ENCODE measurements at regions of chr4 and their contacts with region 1.

Region 1: GRCh38 chr4:3911252-3911856 is 145.2 kb downstream of the ADRA2C start:
- DNase-seq: no peak
- ATAC-seq: no peak
- H3K4me3 ChIP-seq: no peak overlapping the region
- H3K27ac ChIP-seq: no peak overlapping the region
- H3K4me1 ChIP-seq: no peaks in the 10 kb centered on the region
- H3K27me3 ChIP-seq: no peaks in the 10 kb centered on the region
- CTCF ChIP-seq: no peak

Region 2: DNA sequence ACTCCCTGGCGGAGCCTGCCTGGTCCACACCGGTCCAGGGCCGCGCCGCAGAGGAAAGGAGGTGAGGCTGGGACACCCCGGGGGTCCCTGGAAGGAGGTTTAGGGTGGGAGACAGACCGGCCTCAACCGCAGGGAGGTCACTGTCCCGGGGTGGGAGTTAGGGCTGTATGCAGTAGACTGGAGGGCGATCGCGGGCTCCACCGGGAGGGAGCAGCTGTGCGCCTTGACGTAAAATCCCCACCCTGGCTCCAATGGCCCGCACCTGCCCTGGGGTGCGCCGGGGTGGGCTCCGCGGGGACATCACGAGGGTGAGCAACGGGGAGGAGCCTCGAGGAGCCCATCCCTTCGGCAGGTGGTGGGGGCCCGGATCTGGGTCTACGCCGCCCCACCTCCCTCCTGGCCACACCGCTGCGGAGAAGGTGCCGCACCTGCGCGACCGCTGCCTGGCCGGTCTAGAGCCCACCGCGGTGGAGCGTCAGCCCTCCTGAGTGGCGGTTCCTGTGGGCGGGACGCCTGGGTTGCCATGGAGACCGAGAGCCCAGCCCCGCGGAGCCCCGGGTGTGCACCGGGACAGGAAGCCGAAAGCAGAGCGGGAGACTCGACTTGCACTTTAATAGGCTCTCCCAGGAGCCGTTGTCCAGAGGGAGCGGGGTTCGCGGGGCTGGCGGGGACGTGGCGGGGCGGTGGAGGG is 40.0 kb before region 1 on chr4:
- CTCF ChIA-PET with region 1: no interaction called
- POLR2A ChIA-PET with region 1: no interaction called
- intact Hi-C with region 1: no loop called
- DNase-seq: no peak
- ATAC-seq: no peak
- H3K4me3 ChIP-seq: no peak overlapping the region
- H3K27ac ChIP-seq: no peak overlapping the region
- H3K4me1 ChIP-seq: no peaks in the 10 kb centered on the region
- H3K27me3 ChIP-seq: peaks cover 32% of the 10 kb centered on the region
- CTCF ChIP-seq: no peak

Region 3: GRCh38 chr4:3936184-3936583 is 24.8 kb after region 1 on chr4:
- CTCF ChIA-PET with region 1: no interaction called
- POLR2A ChIA-PET with region 1: interaction called, 23 read pairs
- intact Hi-C with region 1: no loop called
- DNase-seq: no peak
- ATAC-seq: no peak
- H3K4me3 ChIP-seq: no peak overlapping the region
- H3K27ac ChIP-seq: no peak overlapping the region
- H3K4me1 ChIP-seq: no peaks in the 10 kb centered on the region
- H3K27me3 ChIP-seq: no peaks in the 10 kb centered on the region
- CTCF ChIP-seq: no peak

Measured in PC-3 (cell line).